ENCODE measurements at regions of chr22 and their contacts with region 1.

Region 1: GRCh38 chr22:22942511-22943329 is 55.1 kb downstream of the IGLL5 start:
- DNase-seq: no peak
- H3K4me3 ChIP-seq: no peak overlapping the region
- CTCF ChIP-seq: peak; percentile 70

Region 2: DNA sequence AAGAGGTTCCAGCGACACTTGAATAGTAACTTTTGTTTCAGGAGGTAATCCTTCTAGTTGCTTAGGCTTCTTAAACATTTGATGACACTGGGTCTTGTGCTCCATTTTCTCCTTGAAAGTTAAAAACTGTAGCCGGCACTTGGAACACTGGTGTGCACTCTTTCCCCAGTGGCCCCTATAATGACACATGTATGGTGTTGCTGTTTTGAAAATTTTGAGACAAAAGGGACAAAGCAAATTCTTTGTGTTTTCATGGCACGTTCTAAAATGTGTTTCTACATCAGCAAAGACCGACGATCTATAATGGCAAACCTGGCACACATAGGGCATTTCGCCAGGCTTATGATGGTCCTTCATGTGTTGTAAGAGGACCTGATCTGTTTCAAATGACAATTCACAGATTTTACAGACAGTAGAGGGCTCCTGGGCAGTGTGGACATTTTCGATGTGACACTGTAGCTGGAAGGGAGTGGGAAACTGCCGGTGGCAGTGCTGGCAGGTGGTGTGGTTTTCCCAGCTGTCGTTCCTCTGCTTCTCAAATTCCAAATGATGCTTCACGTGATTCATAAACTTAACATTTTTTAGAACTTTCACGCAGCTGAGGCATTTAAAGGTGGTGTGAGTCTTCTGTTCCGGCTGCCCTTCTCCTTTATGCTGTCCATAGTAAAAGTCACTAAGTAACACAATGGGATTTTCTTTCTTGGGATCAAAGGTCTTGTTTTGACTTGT is 454.7 kb before region 1 on chr22:
- CTCF ChIA-PET with region 1: no interaction called
- POLR2A ChIA-PET with region 1: no interaction called
- DNase-seq: no peak
- H3K4me3 ChIP-seq: no peak overlapping the region
- CTCF ChIP-seq: no peak

Region 3: GRCh38 chr22:22928666-22929380 is 13.9 kb before region 1 on chr22:
- CTCF ChIA-PET with region 1: interaction called, 40 read pairs
- POLR2A ChIA-PET with region 1: no interaction called
- DNase-seq: no peak
- H3K4me3 ChIP-seq: no peak overlapping the region
- CTCF ChIP-seq: no peak